ENCODE measurements at regions of chrX and their contacts with region 1.

Region 1: GRCh38 chrX:51860679-51861078 is 32.7 kb upstream of the MAGED1 start:
- DNase-seq: no peak
- ATAC-seq: peak in 1 of 2 donors; percentile 46
- H3K4me3 ChIP-seq: no peak overlapping the region
- H3K27ac ChIP-seq: no peak overlapping the region
- H3K4me1 ChIP-seq: no peaks in the 10 kb centered on the region
- H3K27me3 ChIP-seq: no peaks in the 10 kb centered on the region
- CTCF ChIP-seq: peak in 1 of 5 experiments; percentile 27
- POLR2A ChIP-seq: no peak

Region 2: DNA sequence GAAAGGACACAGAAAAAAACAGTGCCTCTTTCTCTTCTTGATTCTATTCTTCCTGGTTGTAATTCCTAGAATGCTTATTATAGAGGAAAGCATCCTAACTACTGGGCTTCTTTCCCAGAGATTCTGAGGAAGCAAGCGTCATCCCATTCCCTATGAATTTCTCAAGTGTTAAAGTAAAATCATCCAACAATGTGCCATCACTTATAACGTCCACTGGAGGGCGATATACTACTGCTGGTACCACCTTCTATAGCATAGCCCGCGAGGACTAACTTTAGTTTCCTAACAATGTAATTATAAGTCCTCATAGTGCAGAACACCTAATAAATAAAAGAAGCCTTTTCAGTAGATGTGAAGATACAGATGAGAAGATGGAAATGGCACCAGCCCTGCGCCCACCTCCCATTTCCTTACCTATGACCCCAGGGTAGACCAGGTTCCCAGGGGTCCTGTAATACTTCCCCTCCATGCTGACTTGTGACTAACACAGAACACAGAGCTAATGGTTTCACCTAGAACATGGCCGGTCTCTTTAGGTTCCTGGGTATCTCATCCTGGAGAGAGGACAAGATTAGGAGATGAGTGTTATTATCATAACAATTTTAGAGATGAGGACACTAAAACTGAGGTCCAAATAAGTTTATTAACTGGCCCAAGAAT is 246.2 kb before region 1 on chrX:
- in situ Hi-C with region 1: loop called in 1 of 4 experiments (anchors 25 kb)
- intact Hi-C with region 1: no loop called
- DNase-seq: no peak
- ATAC-seq: no peak
- H3K4me3 ChIP-seq: no peak overlapping the region
- H3K27ac ChIP-seq: no peak overlapping the region
- H3K4me1 ChIP-seq: no peaks in the 10 kb centered on the region
- H3K27me3 ChIP-seq: peaks cover 0 to 20% (median 16%) of the 10 kb centered on the region in 3 donors
- CTCF ChIP-seq: peak in 3 of 5 experiments; percentile 28 to 37 (median 31)
- POLR2A ChIP-seq: no peak